ENCODE measurements at regions of chr10 and their contacts with region 1.

Region 1: GRCh38 chr10:119253433-119254174 is 46.2 kb downstream of the GRK5 start:
- DNase-seq: no peak
- H3K4me3 Mint-ChIP-seq: peak overlapping the region; percentile 15
- H3K27ac Mint-ChIP-seq: peak overlapping the region; percentile 88
- H3K4me1 Mint-ChIP-seq: peaks cover 63% of the 10 kb centered on the region
- H3K27me3 Mint-ChIP-seq: no peaks in the 10 kb centered on the region

Region 2: GRCh38 chr10:118939211-118940007 is 314.2 kb before region 1 on chr10:
- intact Hi-C with region 1: no loop called
- DNase-seq: no peak
- H3K4me3 Mint-ChIP-seq: no peak overlapping the region
- H3K27ac Mint-ChIP-seq: no peak overlapping the region
- H3K4me1 Mint-ChIP-seq: peaks cover 4% of the 10 kb centered on the region
- H3K27me3 Mint-ChIP-seq: peaks cover 32% of the 10 kb centered on the region

Region 3: GRCh38 chr10:119233821-119234220 is 19.8 kb before region 1 on chr10:
- intact Hi-C with region 1: loop called (anchors 2 kb)
- DNase-seq: no peak
- H3K4me3 Mint-ChIP-seq: no peak overlapping the region
- H3K27ac Mint-ChIP-seq: peak overlapping the region; percentile 74
- H3K4me1 Mint-ChIP-seq: peaks cover 80% of the 10 kb centered on the region
- H3K27me3 Mint-ChIP-seq: no peaks in the 10 kb centered on the region

Region 4: GRCh38 chr10:119268871-119269506 is 15.4 kb after region 1 on chr10:
- intact Hi-C with region 1: loop called (anchors 1 kb)
- DNase-seq: peak; percentile 85
- H3K4me3 Mint-ChIP-seq: peak overlapping the region; percentile 43
- H3K27ac Mint-ChIP-seq: peak overlapping the region; percentile 98
- H3K4me1 Mint-ChIP-seq: peaks cover 76% of the 10 kb centered on the region
- H3K27me3 Mint-ChIP-seq: no peaks in the 10 kb centered on the region